Activated CD4-positive, alpha-beta T cell treated with anti-CD3 and anti-CD28 coated beads for 36 hours (primary cell): ENCODE measurements at regions of chr2 and their contacts with region 1.

Region 1: DNA sequence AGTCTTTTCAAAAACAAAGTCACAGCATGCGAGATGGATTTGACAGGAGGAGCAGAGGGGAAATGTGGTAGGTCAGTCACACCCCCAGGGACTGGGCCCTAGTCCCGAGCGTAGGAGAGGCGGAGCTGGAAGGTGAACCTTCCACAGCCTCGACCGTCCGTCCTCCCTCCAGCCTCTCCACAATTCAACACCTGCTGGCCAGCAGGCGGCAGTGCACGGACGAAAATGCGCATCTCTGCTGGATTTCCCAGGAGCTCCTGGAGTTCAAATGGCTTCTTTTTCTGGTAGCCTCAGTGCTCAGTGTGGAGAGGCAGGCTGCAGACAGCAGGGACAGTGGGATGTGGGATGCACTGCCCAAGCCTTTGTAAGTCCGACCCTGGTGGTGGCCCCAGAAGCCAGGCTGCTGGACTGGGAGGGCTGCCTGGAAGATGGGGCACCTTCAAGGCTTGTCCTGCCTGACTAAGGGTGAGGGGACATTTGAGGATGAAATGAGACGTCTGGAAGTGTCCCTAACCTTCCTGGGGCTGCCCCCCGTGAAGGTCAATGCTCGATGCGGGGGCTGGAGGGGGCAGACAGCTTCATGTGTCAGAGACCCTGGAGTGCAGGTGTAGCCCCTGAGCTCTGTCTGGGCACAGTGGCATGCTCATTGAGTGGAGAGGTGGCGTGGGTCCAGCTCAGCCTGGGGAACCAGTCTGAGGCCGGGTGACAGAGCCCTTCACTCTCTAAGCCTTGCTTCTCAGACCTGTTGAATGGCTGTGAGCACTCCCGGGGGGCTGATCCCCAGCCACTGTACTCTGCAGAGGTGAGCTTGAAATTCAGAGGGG is 189.5 kb downstream of the TFCP2L1 start:
- DNase-seq: peak; percentile 64
- ATAC-seq: peak; percentile 51
- H3K4me3 Mint-ChIP-seq: no peak overlapping the region
- H3K27ac Mint-ChIP-seq: no peak overlapping the region
- H3K4me1 Mint-ChIP-seq: no peaks in the 10 kb centered on the region
- H3K27me3 Mint-ChIP-seq: no peaks in the 10 kb centered on the region

Region 2: GRCh38 chr2:120712180-120712681 is 383.2 kb before region 1 on chr2:
- CTCF ChIA-PET with region 1: no interaction called
- POLR2A ChIA-PET with region 1: no interaction called
- intact Hi-C with region 1: no loop called
- DNase-seq: no peak
- ATAC-seq: no peak
- H3K4me3 Mint-ChIP-seq: no peak overlapping the region
- H3K27ac Mint-ChIP-seq: no peak overlapping the region
- H3K4me1 Mint-ChIP-seq: no peaks in the 10 kb centered on the region
- H3K27me3 Mint-ChIP-seq: peaks cover 13% of the 10 kb centered on the region

Region 3: DNA sequence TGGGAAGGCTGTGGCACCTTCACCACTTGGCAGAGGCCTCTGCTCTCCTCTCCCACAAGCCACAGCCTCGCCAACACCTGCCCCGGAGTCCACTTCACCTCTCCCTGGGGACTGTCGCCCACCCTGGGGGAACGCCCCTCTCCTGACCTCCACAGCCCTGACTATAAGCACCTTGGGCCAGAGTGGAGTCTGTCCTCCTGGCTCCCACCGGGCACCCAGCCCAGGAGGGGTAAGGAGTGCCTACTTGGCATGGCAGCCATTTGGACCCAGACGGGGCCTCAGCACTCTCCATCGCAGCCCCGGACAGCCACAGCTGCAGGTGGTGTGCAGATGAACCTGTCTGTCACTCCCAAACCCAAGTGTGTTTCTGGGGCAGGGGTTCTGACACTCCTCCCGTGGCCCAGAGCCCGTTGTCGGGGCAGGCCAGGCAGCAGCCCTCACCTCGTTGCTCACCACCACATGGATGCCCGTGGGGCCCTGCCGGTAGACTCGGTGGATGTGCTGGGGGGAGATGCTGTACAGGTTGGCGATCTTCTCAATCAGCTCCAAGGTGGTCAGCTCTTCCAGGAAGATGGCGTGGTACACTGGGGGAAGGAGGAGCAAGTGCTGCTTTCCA is 136.0 kb after region 1 on chr2:
- CTCF ChIA-PET with region 1: no interaction called
- POLR2A ChIA-PET with region 1: no interaction called
- intact Hi-C with region 1: no loop called
- DNase-seq: no peak
- ATAC-seq: no peak
- H3K4me3 Mint-ChIP-seq: no peak overlapping the region
- H3K27ac Mint-ChIP-seq: no peak overlapping the region
- H3K4me1 Mint-ChIP-seq: no peaks in the 10 kb centered on the region
- H3K27me3 Mint-ChIP-seq: no peaks in the 10 kb centered on the region

Region 4: GRCh38 chr2:121329786-121330185 is 234.3 kb after region 1 on chr2:
- CTCF ChIA-PET with region 1: interaction called, 4 read pairs
- POLR2A ChIA-PET with region 1: no interaction called
- intact Hi-C with region 1: loop called in 1 of 2 experiments (anchors 10 kb)
- DNase-seq: no peak
- ATAC-seq: no peak
- H3K4me3 Mint-ChIP-seq: no peak overlapping the region
- H3K27ac Mint-ChIP-seq: no peak overlapping the region
- H3K4me1 Mint-ChIP-seq: no peaks in the 10 kb centered on the region
- H3K27me3 Mint-ChIP-seq: peaks cover 7% of the 10 kb centered on the region